H1 (cell line): ENCODE measurements at regions of chr16 and their contacts with region 1.

Region 1: DNA sequence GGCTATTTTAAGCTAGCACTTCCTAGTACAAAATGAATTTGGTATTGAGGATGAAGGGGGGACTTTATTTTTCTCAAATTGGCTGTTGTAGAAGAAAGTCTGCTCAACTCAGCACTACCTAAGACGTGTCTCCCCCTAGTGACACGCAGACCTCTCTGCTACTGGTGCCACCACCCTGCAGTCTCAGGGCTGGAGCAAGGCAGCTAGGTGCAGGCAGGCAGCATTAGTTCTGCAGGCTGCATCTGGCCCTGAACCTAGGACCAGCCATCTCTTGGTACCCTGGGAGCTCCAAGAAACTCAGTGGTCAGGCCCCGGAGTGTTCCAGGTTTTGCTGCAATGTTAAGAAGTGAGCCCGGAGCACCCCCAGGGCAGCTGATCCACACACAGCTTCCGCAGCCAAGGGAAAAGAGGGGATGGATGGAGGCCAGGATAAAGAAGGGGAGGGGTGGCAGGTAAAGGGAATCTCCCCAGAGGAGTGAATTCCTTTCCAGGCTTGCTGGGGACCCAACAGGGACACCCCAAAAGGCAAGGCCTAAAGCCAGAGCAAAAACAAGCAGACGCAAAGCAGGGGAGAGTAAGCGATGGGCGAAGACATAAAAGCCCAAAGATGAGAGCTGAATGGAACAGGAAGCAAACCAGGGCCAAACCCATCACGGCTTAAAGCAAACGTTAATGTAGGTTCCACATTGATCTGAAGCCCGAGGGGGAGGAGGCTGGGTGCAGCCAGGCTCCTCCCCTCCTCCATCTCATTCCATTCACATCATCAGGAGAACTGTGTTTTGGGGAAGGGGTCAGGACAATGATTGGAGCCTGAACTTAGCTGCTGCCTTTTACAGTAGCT is 200.5 kb downstream of the ZFHX3 start:
- DNase-seq: no peak
- H3K4me3 ChIP-seq: no peak overlapping the region
- H3K27ac ChIP-seq: no peak overlapping the region
- H3K4me1 ChIP-seq: peaks cover 0 to 9% (median 3%) of the 10 kb centered on the region in 4 experiments; a peak in 3 of 7 replicates
- H3K27me3 ChIP-seq: no peaks in the 10 kb centered on the region
- CTCF ChIP-seq: peak; percentile 77 to 88 (median 82)
- EP300 ChIP-seq: no peak
- POLR2A ChIP-seq: no peak
- RAD21 ChIP-seq: peak; percentile 78

Region 2: GRCh38 chr16:72501739-72502593 is 345.4 kb before region 1 on chr16:
- CTCF ChIA-PET with region 1: interaction called, 13 read pairs
- POLR2A ChIA-PET with region 1: no interaction called
- DNase-seq: peak in 1 of 2 experiments; percentile 68
- H3K4me3 ChIP-seq: no peak overlapping the region
- H3K27ac ChIP-seq: no peak overlapping the region
- H3K4me1 ChIP-seq: no peaks in the 10 kb centered on the region
- H3K27me3 ChIP-seq: no peaks in the 10 kb centered on the region
- CTCF ChIP-seq: peak; percentile 60 to 84 (median 83)
- EP300 ChIP-seq: no peak
- POLR2A ChIP-seq: no peak
- RAD21 ChIP-seq: peak; percentile 96 to 97

Region 3: DNA sequence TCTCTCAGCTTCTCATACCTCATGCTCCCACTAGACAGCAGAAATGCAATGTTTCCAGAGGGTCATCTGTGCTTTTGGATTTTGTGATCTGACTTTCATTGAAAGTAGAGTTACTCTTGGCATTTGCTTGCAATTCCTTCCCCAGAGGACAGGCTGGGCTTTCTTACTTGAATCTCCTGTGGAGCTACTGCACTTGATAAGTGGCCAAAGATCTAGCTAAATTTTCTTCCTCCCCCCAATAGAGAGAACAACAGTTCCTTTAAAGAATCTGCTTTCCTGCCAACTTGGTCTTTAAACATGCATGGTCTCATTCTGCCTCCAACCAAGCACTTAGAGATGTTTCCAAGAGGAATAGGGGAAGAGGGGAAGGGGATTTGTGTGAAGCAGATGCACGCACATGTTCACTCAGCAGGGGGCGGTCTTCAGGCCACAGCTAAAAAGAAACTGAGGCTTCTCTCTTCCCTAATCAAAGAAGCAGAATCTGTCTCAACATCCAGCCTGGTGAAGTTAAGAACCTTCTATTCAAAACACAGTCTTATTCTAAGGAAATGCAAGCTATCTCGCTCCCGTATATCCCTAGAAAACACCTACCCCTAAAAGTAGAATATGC is 29.1 kb before region 1 on chr16:
- CTCF ChIA-PET with region 1: interaction called, 13 read pairs
- POLR2A ChIA-PET with region 1: no interaction called
- DNase-seq: peak; percentile 5 to 57
- H3K4me3 ChIP-seq: no peak overlapping the region
- H3K27ac ChIP-seq: no peak overlapping the region
- H3K4me1 ChIP-seq: no peaks in the 10 kb centered on the region
- H3K27me3 ChIP-seq: no peaks in the 10 kb centered on the region
- CTCF ChIP-seq: peak; percentile 37 to 62 (median 53)
- EP300 ChIP-seq: no peak
- POLR2A ChIP-seq: no peak
- RAD21 ChIP-seq: peak; percentile 30 to 44; a peak in 3 of 4 replicates

Region 4: DNA sequence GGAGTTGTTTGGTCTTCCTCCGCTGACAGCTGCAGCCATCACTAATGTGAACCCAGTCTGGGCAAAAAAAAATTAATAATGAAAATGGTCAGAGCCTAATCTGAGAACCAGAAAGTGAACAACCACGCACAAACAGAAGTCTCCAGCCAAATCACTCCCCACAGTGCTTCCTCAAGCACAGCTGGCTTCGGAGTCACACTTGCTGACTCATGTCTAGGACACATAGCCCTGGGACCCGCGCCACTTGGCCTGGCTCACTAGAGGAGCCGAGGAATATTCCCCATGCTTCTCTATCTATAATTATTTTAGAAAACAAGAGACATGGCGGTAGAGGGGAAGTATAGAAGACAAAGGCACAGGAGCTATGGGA is 91.4 kb after region 1 on chr16:
- CTCF ChIA-PET with region 1: interaction called, 10 read pairs
- POLR2A ChIA-PET with region 1: no interaction called
- DNase-seq: no peak
- H3K4me3 ChIP-seq: no peak overlapping the region
- H3K27ac ChIP-seq: no peak overlapping the region
- H3K4me1 ChIP-seq: peaks cover 5 to 17% (median 7%) of the 10 kb centered on the region in 4 experiments; a peak in 6 of 7 replicates
- H3K27me3 ChIP-seq: no peaks in the 10 kb centered on the region
- CTCF ChIP-seq: no peak
- EP300 ChIP-seq: no peak
- POLR2A ChIP-seq: no peak
- RAD21 ChIP-seq: no peak